Heart left ventricle (tissue), 16 donors: ENCODE measurements at regions of chr9 and their contacts with region 1.

Region 1: DNA sequence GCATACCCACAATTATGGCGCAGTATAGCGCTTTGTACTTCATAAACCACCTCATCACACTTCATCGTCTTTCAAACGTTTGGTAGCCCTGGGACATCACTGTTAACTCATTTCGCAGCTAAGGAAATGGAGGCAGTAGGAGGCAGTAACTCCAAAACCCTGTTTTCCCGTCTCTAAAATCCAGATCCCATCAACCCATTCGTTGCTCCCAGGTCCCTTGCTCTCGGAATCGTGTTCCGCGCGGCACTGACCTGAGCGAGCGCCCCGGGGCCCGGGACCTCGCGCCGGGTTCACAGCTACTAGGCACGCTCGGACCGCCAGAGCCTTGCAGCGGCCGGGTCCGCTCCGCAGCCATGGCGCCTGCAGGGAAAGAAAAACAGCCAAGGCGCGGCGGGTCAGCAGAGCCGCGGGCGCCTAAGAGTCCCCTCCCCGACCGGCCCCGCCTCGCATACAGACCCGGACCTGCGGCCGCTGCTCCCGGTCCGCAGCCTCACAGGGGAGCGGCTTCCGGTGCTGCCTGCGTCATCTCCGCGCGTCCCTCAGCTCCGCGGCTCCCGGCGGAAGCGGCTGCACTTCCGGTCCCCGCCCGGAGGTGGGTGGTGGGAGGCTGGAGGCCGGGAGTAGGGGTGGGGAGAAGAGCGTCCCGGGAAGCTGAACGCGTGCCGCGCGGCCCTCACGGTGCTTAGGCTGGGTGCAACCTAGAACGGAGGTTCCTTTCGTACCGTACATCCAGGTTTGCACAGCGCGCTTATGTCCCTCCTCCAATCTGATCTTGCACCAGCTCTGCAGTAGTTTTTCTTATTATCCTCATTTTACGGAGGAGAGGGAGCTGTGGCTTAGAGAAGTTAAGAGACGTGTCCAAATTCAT is at the start of gene FBXW2:
- DNase-seq: peak; percentile 94 to 96 (median 95)
- ATAC-seq: peak; percentile 100
- H3K4me3 ChIP-seq: peak within 1 kb of the TSS; percentile 64 to 97 (median 82)
- H3K27ac ChIP-seq: peak within 1 kb of the TSS; percentile 45 to 96 (median 90)
- H3K4me1 ChIP-seq: peaks cover 3 to 51% (median 26%) of the 10 kb centered on the region in 12 donors
- H3K27me3 ChIP-seq: no peaks in the 10 kb centered on the region
- CTCF ChIP-seq: peak in 1 of 12 donors; percentile 6
- POLR2A ChIP-seq: peak in 1 of 2 donors; percentile 91
- total RNA-seq, gene FBXW2: 27.0 to 58.7 (median 42.0) TPM

Region 2: DNA sequence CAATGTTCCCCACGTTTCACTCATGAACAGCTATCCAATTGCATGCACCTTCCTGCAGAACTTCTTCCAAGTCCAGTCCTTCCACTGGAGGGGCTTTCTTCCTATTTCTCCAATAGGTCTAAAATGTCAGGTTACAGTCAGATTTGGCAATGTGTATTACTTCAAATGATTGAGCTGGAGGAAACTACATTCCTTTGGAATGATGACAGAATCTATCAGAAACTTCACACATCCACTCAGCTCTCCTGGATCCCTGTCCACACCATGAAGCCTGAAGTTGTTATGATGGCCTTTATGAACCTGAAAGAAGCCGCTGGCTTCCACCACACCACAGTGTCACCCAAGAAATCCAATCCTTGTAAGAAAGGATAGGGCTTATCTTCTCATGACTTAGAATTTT is 32.1 kb before region 1 on chr9:
- intact Hi-C with region 1: loop called in 1 of 10 experiments (anchors 5 kb)
- DNase-seq: no peak
- ATAC-seq: no peak
- H3K4me3 ChIP-seq: no peak overlapping the region
- H3K27ac ChIP-seq: no peak overlapping the region
- H3K4me1 ChIP-seq: peaks cover 0 to 21% (median 0%) of the 10 kb centered on the region in 12 donors
- H3K27me3 ChIP-seq: no peaks in the 10 kb centered on the region
- CTCF ChIP-seq: no peak
- POLR2A ChIP-seq: no peak

Region 3: DNA sequence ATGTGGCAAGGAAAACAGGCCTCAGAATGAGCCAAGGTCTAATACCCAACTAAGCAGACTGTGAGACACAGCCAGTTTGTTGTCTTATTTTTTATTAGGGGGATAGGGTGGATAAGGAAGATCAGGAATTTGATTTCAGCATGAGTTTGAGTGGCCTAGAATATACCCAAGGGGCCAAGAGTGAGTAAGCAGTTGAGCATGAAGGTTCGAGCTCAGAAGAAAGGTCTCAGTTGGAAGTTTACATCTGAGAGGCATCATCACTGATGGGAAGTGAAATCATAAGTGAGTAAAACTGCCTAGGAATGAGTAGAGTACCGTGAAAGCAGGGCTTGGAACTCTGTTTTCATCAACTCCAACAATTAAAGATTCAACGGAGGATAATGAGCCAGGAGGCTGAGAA is 37.0 kb after region 1 on chr9:
- intact Hi-C with region 1: no loop called
- DNase-seq: no peak
- ATAC-seq: no peak
- H3K4me3 ChIP-seq: no peak overlapping the region
- H3K27ac ChIP-seq: no peak overlapping the region
- H3K4me1 ChIP-seq: no peaks in the 10 kb centered on the region
- H3K27me3 ChIP-seq: no peaks in the 10 kb centered on the region
- CTCF ChIP-seq: no peak
- POLR2A ChIP-seq: no peak

Region 4: GRCh38 chr9:120842690-120843499 is 49.8 kb after region 1 on chr9 and contains the start of gene PSMD5:
- intact Hi-C with region 1: loop called in 6 of 10 experiments (anchors 2 to 5 kb)
- DNase-seq: peak; percentile 98 to 100 (median 99)
- ATAC-seq: peak; percentile 99
- H3K4me3 ChIP-seq: peak within 1 kb of the TSS; percentile 60 to 95 (median 78)
- H3K27ac ChIP-seq: peak within 1 kb of the TSS; percentile 83 to 99 (median 94)
- H3K4me1 ChIP-seq: peaks cover 0 to 44% (median 17%) of the 10 kb centered on the region in 12 donors
- H3K27me3 ChIP-seq: no peaks in the 10 kb centered on the region
- CTCF ChIP-seq: peak in 3 of 12 donors; percentile 11 to 27 (median 13)
- POLR2A ChIP-seq: peak; percentile 34 to 84
- total RNA-seq, gene PSMD5: 10.2 to 17.9 (median 13.4) TPM